ENCODE measurements at regions of chr9 and their contacts with region 1.

Region 1: DNA sequence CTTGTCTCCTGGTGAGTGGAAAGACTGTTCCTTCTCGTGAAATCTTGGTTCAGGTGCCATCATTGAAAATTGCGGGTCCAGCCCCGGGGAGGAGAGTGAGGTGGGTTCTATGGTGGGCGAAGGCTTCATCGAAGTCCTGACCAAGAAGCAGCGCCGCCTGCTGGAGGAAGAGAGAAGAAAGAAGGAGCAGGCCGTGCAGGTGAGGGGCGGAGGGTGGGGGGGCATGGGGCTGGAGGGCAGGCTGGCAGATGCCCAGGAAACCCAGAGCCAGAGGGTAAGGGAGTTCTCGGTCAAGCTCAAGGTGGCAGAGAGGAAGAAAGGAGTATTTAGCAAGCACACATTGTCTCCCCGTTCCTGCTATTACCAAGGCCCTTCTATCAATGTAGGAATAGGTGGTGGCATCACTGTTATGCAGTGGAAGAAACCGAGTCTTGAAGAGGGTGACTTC is 24.3 kb upstream of the POMT1 start:
- DNase-seq: no peak
- H3K4me3 ChIP-seq: no peak overlapping the region
- CTCF ChIP-seq: peak; percentile 57

Region 2: DNA sequence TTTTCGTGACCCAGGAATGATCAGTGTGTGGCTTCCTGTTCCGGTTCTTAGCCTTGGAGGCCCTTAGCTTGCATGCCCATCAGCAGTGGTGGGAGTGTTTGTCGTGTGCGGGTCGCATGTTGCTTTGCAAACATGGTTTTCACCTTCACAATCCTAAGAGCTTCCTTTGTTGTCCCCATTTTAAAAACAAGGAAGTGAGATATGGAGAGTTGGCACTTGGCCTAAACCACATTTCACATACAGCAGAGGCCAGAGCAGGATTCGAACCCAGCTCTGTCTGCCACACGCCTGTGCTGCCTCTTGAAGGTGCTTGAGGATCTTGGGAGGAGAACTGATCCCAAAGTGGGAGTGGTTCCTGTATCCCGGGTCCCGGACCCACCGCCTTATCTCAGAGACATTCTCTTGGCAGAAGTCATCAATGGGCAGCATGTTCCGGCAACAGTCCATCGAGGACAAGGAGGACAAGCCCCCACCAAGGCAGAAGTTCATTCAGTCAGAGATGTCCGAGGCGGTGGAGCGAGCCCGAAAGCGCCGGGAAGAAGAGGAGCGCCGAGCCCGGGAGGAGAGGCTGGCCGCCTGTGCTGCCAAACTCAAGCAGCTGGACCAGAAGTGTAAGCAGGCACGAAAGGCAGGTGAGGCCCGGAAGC is 14.0 kb before region 1 on chr9:
- CTCF ChIA-PET with region 1: interaction called, 25 read pairs
- POLR2A ChIA-PET with region 1: no interaction called
- DNase-seq: no peak
- H3K4me3 ChIP-seq: no peak overlapping the region
- CTCF ChIP-seq: no peak

Region 3: DNA sequence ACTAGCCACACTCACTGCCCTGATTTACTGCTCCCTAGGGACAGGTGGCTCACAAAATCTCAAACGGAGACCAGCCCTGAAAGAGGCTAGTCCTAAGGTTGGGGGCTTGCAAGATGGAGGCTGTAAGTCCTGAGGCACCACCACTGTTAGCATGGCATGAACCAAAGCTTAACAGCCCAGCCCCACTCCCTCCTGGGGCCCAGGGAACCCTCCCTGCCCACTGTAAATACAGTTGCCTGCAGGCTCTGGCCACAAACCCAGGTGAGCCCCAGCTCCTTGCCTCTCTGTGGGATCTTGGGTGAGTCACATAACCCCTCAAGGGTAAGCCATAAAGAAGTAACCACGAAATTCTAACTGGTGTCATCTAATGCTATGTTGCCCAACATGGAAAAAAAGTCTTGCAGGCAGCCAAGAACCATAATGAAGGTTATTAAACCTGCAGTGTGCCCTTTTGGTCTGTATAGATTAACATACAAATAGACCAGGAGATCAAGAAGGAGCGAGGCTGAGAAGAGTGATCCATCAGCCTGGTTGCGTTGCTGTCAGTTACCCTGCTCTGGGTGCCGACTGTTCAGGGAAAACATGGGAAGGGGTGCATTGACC is 22.6 kb after region 1 on chr9:
- CTCF ChIA-PET with region 1: interaction called, 16 read pairs
- POLR2A ChIA-PET with region 1: no interaction called
- DNase-seq: peak; percentile 44
- H3K4me3 ChIP-seq: no peak overlapping the region
- CTCF ChIP-seq: no peak